Endothelial cell of umbilical vein (primary cell): ENCODE measurements at regions of chr17 and their contacts with region 1.

Region 1: GRCh38 chr17:75205037-75205792 is at the start of gene NUP85:
- DNase-seq: peak; percentile 96
- H3K4me3 ChIP-seq: peak within 1 kb of the TSS; percentile 58 to 91 (median 85)
- H3K27ac ChIP-seq: peak within 1 kb of the TSS; percentile 90
- H3K4me1 ChIP-seq: peaks cover 2% of the 10 kb centered on the region
- H3K27me3 ChIP-seq: no peaks in the 10 kb centered on the region
- CTCF ChIP-seq: no peak
- POLR2A ChIP-seq: peak; percentile 88
- total RNA-seq, gene NUP85: 98.3 and 105 TPM in 2 replicates

Region 2: DNA sequence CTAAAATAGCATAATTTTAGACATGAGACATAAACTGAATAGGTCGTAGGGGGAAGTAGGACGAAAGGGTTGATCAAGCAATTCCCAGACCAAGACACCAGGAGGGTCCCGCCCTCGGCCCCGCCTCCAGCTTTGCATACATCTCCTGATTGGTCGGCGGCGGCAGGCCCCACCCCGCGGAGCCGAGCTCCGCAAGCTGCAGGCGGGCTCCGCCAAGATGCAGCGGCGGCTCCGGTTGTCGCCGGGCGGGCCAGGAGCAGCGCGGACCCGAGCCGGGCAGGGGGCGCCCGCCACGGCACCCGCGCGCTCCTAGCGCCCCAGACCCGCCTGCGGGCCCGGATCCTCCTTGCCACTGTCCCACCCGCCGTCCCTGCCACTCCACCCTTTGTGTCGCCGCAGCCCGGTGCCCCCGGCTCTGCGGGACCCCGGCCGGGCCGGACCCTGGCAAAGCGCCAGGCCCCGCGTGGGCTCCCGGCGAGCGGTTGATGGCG is 217.8 kb before region 1 on chr17 and contains the start of gene CDR2L:
- CTCF ChIA-PET with region 1: interaction called, 10 read pairs
- POLR2A ChIA-PET with region 1: no interaction called
- dilution Hi-C with region 1: no loop called
- intact Hi-C with region 1: no loop called
- DNase-seq: peak; percentile 95
- H3K4me3 ChIP-seq: peak within 1 kb of the TSS; percentile 47 to 89 (median 67)
- H3K27ac ChIP-seq: peak within 1 kb of the TSS; percentile 93
- H3K4me1 ChIP-seq: peaks cover 12% of the 10 kb centered on the region
- H3K27me3 ChIP-seq: no peaks in the 10 kb centered on the region
- CTCF ChIP-seq: no peak
- POLR2A ChIP-seq: peak; percentile 52
- total RNA-seq, gene CDR2L: 34.9 and 36.7 TPM in 2 replicates

Region 3: GRCh38 chr17:75046582-75047289 is 158.5 kb before region 1 on chr17 and contains the starts of genes ATP5PD and KCTD2:
- CTCF ChIA-PET with region 1: interaction called, 5 read pairs
- POLR2A ChIA-PET with region 1: no interaction called
- dilution Hi-C with region 1: no loop called
- intact Hi-C with region 1: loop called (anchors 1 kb)
- DNase-seq: peak; percentile 98
- H3K4me3 ChIP-seq: peak within 1 kb of the TSS; percentile 58 to 93 (median 67)
- H3K27ac ChIP-seq: peak within 1 kb of the TSS; percentile 19
- H3K4me1 ChIP-seq: peaks cover 13% of the 10 kb centered on the region
- H3K27me3 ChIP-seq: no peaks in the 10 kb centered on the region
- CTCF ChIP-seq: no peak
- POLR2A ChIP-seq: peak; percentile 93
- total RNA-seq, gene ATP5PD: 200 and 202 TPM in 2 replicates
- total RNA-seq, gene KCTD2: 20.6 and 23.2 TPM in 2 replicates

Region 4: DNA sequence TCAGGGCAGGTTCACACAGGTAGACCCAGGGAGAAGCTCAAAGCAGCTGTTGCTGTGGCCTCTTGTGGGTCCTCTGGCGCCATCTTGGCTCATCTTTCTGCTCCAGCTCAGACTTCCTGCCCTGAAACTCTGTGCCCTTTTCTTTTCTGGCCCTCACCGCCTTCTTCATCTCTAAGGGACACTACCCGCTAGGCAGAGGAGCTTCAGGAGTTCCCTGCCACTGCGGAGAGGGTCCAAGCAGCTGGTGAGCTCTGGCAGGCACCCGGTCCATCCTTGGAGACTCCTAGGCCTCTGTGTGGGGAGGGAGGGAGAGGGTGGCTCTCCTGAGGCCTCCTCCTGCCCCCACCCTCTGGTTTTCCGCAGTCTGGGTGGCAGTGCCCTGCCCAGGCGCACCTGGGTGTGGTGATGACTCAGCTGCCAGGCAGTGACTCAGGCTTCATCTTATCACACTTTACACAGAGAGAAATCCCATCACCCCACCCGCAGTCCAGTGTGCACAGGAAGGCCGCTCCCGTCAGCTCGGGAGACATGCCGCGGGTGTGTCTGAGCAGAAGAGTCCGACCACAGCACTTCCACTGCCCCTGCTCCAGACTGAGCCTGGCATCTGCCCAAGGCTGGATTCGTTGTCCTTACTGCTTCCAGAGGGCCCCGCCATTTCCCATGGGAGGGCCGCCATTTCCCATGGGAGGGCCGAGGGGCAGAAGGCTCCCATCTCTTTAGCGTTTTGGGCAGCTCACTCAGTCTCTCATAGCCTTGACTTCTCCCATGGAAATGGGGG is 81.0 kb before region 1 on chr17:
- CTCF ChIA-PET with region 1: interaction called, 11 read pairs
- POLR2A ChIA-PET with region 1: no interaction called
- dilution Hi-C with region 1: no loop called
- intact Hi-C with region 1: no loop called
- DNase-seq: peak; percentile 87
- H3K4me3 ChIP-seq: no peak overlapping the region
- H3K27ac ChIP-seq: peak overlapping the region; percentile 85
- H3K4me1 ChIP-seq: peaks cover 17% of the 10 kb centered on the region
- H3K27me3 ChIP-seq: no peaks in the 10 kb centered on the region
- CTCF ChIP-seq: no peak
- POLR2A ChIP-seq: peak; percentile 66

Region 5: GRCh38 chr17:75154195-75155106 is 50.8 kb before region 1 on chr17 and contains the start of gene JPT1:
- CTCF ChIA-PET with region 1: interaction called, 7 read pairs
- POLR2A ChIA-PET with region 1: no interaction called
- dilution Hi-C with region 1: no loop called
- intact Hi-C with region 1: loop called (anchors 1 kb)
- DNase-seq: peak; percentile 99
- H3K4me3 ChIP-seq: peak within 1 kb of the TSS; percentile 57 to 83 (median 62)
- H3K27ac ChIP-seq: peak within 1 kb of the TSS; percentile 60
- H3K4me1 ChIP-seq: peaks cover 27% of the 10 kb centered on the region
- H3K27me3 ChIP-seq: no peaks in the 10 kb centered on the region
- CTCF ChIP-seq: no peak
- POLR2A ChIP-seq: peak; percentile 100
- total RNA-seq, gene JPT1: 352 and 364 TPM in 2 replicates

Region 6: DNA sequence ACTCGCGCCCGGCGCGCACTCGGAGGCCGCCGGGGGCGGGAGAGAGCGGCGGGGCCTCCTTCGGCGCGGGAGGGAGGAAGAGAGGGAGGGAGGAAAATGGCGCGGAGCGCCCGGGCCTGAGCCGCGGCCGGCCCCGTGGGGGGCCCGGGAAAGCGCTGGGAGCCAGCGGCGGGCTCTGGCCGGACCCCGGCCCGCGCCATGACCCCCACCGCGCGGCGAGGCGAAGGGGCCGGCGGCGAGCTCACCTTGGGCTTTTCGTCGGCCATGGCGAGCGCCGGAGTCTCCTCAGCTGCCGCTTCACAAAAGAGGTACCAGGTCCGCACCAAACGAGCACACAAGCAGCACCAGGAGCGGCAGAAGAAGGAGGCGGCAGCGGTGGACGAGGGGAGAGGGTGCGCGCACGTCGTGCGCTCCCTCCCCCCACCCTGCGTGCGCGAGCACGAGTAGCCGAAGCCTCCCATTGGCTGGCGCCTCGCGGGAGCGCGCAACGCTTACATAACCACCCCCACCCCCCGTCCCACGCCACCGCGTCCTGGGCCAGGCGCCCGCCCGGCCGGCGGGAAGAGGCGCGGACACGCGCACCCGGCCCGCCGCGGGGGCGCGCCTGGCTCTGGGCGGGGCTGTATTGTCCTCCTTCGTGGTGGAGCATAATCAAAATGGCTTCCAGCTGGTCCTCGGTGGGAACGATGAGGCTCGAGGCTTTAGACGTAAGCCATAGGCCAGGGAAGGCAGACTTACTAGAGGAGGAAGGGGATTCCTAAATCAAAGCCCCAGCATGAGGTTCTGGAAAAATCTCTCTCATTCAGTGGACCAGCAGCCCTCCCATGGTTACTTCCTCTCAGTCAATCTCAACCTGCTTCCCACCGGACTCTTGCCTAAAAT is 22.4 kb before region 1 on chr17 and contains the start of gene SUMO2:
- CTCF ChIA-PET with region 1: interaction called, 21 read pairs
- POLR2A ChIA-PET with region 1: interaction called, 3 read pairs
- dilution Hi-C with region 1: no loop called
- intact Hi-C with region 1: loop called (anchors 1 kb)
- DNase-seq: peak; percentile 96
- H3K4me3 ChIP-seq: peak within 1 kb of the TSS; percentile 69 to 95 (median 88)
- H3K27ac ChIP-seq: peak within 1 kb of the TSS; percentile 85
- H3K4me1 ChIP-seq: peaks cover 10% of the 10 kb centered on the region
- H3K27me3 ChIP-seq: no peaks in the 10 kb centered on the region
- CTCF ChIP-seq: peak in 1 of 2 donors; percentile 42
- POLR2A ChIP-seq: peak; percentile 73
- total RNA-seq, gene SUMO2: 424 and 437 TPM in 2 replicates

Region 7: DNA sequence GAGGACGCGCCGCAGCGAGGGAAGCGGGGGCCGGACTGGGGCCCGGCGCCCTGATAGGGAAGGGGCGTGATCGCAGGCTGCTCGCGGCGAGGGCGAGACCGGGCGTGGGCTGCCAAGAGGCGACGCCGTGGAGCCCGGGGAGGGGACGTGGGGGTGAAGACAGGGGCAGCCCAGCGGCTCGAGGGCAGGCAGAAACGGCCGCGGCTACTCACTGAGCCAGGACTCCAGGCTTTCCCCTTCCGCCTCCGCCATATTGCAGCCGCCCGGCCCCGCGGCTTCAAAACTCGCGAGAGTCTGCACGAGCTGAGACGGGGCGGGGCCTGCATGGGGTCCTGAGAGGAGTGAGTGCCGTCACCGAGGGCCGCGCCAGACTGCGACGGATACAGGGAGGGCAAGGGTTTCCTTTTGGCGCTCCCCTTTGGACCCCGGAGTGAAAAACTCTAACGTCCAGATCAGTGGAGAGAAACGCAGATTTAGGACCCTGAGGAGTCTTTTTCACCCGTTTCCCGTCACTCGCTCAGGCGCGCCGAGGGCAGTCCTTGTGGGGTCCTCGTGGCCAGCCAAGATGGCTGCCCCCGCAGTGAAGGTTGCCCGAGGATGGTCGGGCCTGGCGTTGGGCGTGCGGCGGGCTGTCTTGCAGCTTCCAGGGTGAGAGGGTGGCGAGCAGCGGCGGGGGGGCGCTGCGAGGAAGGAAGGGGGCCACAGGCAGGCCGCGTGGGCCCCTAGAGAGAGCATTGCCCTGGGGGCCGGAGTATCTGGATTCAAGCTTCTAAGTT is 56.3 kb after region 1 on chr17 and contains the starts of genes GGA3 and MRPS7:
- CTCF ChIA-PET with region 1: interaction called, 4 read pairs
- POLR2A ChIA-PET with region 1: interaction called, 10 read pairs
- dilution Hi-C with region 1: no loop called
- intact Hi-C with region 1: no loop called
- DNase-seq: peak; percentile 95
- H3K4me3 ChIP-seq: peak within 1 kb of the TSS; percentile 64 to 92 (median 76)
- H3K27ac ChIP-seq: peak within 1 kb of the TSS; percentile 97
- H3K4me1 ChIP-seq: peaks cover 27% of the 10 kb centered on the region
- H3K27me3 ChIP-seq: no peaks in the 10 kb centered on the region
- CTCF ChIP-seq: no peak
- POLR2A ChIP-seq: peak; percentile 76
- total RNA-seq, gene GGA3: 39.2 and 62.9 TPM in 2 replicates
- total RNA-seq, gene MRPS7: 65.7 and 79.8 TPM in 2 replicates